ENCODE measurements at regions of chr6 and their contacts with region 1.

Region 1: DNA sequence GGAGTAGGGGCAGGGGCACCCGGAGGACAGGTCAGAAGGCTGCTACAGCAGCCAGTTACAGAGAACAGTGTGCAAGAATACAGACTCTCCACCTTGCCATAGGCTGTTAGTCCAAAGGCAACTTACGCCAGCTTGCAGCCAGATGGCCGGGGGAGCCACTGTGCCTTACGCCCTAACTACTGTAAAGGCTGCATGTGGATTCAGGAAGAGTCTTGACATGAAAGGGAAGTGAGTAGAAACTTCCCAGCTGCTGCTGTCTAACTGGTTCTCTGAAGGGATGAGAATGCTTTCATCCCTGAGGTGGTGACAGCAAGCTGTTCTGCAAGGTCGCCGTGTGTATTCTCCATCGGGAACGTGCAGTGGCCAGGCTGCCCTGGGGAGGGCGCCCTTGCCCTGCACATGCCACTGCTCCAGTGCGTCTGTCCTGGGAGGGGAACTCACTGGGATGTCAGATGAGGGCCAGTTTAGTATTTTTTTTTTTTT is 46.1 kb downstream of the LYRM4 start:
- DNase-seq: peak; percentile 45 to 96 (median 63)

Region 2: GRCh38 chr6:5250911-5251310 is 36.3 kb after region 1 on chr6:
- intact Hi-C with region 1: loop called (anchors 5 kb)
- DNase-seq: no peak

Region 3: DNA sequence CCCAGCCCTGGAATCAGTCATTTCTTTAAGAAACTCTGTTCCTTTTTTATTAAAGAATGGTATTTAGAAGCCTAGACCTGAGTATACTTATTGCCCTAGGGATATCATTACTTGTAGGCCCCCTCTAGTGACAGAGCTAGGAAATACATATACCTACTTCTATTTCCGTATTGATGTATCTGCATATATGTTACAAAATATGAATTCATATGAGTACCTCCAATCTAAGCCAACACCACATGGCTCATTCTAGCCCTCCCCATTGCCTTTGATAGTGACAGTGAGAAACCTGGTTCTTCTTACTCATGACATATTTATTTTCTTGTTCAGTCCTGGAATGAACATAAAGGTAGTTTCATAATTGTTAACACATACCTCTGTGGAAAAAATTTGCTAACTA is 183.9 kb after region 1 on chr6:
- intact Hi-C with region 1: loop called (anchors 1 kb)
- DNase-seq: no peak

Region 4: GRCh38 chr6:5553767-5554166 is 339.2 kb after region 1 on chr6:
- intact Hi-C with region 1: no loop called
- DNase-seq: no peak